Activated naive CD4-positive, alpha-beta T cell treated with anti-CD3 and anti-CD28 coated beads for 36 hours (primary cell): ENCODE measurements at regions of chr1 and their contacts with region 1.

Region 1: DNA sequence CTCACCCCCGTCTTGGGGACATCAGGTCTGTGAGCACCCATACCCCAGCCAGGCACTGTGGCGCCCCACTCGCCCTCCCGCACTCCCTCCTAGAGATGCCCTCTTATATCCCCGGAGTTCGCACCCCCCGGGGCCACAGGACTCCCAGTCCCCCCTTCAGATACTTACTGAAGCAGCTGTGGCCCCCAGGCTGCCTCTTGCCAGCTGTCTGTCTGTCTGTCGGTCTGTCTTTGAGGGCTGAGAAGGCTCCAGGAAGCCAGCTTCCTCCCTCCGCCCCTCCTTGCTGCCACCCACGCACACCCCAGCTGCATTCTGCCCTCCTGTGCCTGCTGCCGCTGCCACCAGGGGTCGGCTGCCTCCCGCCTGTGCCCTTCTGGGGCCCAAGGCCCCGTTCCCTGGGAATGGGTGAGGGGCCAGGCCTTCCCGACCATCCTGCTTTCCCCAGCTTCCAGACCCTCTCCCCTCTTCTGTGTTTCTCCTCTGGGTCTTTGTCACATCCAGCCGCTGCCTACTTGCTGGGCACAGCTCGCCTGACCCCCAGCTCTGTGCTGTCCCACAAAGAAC is at the start of gene PTPN7:
- DNase-seq: peak; percentile 96
- H3K4me3 Mint-ChIP-seq: peak within 1 kb of the TSS; percentile 99
- H3K27ac Mint-ChIP-seq: peak within 1 kb of the TSS; percentile 100
- H3K4me1 Mint-ChIP-seq: peaks cover 80% of the 10 kb centered on the region
- H3K27me3 Mint-ChIP-seq: no peaks in the 10 kb centered on the region
- total RNA-seq, gene PTPN7: 112 to 119 TPM

Region 2: GRCh38 chr1:201982623-201983379 is 177.7 kb before region 1 on chr1 and contains the start of gene RNPEP:
- CTCF ChIA-PET with region 1: no interaction called
- intact Hi-C with region 1: no loop called
- DNase-seq: peak; percentile 57
- H3K4me3 Mint-ChIP-seq: peak within 1 kb of the TSS; percentile 92
- H3K27ac Mint-ChIP-seq: peak within 1 kb of the TSS; percentile 69
- H3K4me1 Mint-ChIP-seq: peaks cover 17% of the 10 kb centered on the region
- H3K27me3 Mint-ChIP-seq: no peaks in the 10 kb centered on the region
- total RNA-seq, gene RNPEP: 43.4 to 44.4 TPM

Region 3: GRCh38 chr1:202144402-202145067 is 15.9 kb before region 1 on chr1 and contains the start of gene ARL8A:
- CTCF ChIA-PET with region 1: interaction called, 15 read pairs
- intact Hi-C with region 1: loop called (anchors 1 kb)
- DNase-seq: peak; percentile 74
- H3K4me3 Mint-ChIP-seq: peak within 1 kb of the TSS; percentile 91
- H3K27ac Mint-ChIP-seq: peak within 1 kb of the TSS; percentile 88
- H3K4me1 Mint-ChIP-seq: peaks cover 23% of the 10 kb centered on the region
- H3K27me3 Mint-ChIP-seq: no peaks in the 10 kb centered on the region
- total RNA-seq, gene ARL8A: 28.1 to 30.6 TPM